A673 (cell line): ENCODE measurements at regions of chr1 and their contacts with region 1.

Region 1: GRCh38 chr1:112706908-112707663 is at the start of gene RHOC:
- DNase-seq: peak; percentile 87
- H3K4me3 ChIP-seq: peak within 1 kb of the TSS; percentile 64
- H3K27ac ChIP-seq: peak within 1 kb of the TSS; percentile 75
- H3K4me1 ChIP-seq: peaks cover 22% of the 10 kb centered on the region
- H3K27me3 ChIP-seq: no peaks in the 10 kb centered on the region
- CTCF ChIP-seq: peak; percentile 86
- total RNA-seq, gene RHOC: 54.3 and 62.5 TPM in 2 replicates

Region 2: DNA sequence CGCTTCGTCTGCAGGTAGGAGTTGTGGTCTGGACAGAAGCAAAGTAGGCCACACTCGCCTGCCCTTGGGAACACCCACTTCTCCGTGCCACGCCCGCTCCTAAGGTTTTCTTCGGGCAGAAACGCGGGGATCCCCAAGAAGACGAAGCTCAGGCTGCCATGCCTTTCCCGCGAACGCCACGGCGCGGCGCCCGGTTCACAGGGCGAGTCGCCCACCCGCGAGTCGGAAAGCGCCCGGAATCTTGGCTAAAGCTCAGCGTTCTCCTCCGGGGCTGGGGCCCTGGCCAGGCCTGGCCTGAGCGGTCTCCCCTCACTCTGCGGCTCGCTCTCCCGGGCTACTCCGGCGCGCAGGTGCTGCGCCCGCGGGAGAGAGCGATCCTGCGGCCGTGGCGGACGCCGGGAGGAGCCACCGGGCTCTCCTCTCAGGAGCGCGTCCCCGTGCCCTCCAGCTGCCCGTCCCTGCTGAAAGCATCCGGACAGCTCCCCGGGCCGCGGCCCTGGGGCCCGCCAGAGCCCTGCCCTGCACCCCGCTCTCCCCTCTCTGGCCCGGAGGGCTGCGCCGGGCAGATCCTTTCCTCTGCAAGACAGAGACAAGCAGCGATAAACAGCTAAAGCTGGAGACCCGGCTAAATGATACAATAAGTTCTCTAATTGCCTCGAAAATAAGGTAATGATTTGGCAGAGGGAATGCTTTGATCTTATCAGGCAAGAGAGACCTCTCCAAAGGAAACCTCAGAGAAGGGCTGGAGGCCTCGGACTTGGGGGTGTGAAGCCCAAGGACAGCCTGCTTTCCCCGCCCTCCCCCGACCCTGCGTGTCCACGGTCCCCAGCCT is 205.1 kb before region 1 on chr1:
- CTCF ChIA-PET with region 1: no interaction called
- POLR2A ChIA-PET with region 1: no interaction called
- intact Hi-C with region 1: loop called (anchors 5 kb)
- DNase-seq: peak; percentile 78
- H3K4me3 ChIP-seq: peak overlapping the region; percentile 55
- H3K27ac ChIP-seq: no peak overlapping the region
- H3K4me1 ChIP-seq: no peaks in the 10 kb centered on the region
- H3K27me3 ChIP-seq: no peaks in the 10 kb centered on the region
- CTCF ChIP-seq: peak; percentile 75

Region 3: GRCh38 chr1:112557385-112557784 is 149.7 kb before region 1 on chr1:
- CTCF ChIA-PET with region 1: no interaction called
- POLR2A ChIA-PET with region 1: no interaction called
- intact Hi-C with region 1: no loop called
- DNase-seq: no peak
- H3K4me3 ChIP-seq: no peak overlapping the region
- H3K27ac ChIP-seq: no peak overlapping the region
- H3K4me1 ChIP-seq: no peaks in the 10 kb centered on the region
- H3K27me3 ChIP-seq: no peaks in the 10 kb centered on the region
- CTCF ChIP-seq: no peak

Region 4: DNA sequence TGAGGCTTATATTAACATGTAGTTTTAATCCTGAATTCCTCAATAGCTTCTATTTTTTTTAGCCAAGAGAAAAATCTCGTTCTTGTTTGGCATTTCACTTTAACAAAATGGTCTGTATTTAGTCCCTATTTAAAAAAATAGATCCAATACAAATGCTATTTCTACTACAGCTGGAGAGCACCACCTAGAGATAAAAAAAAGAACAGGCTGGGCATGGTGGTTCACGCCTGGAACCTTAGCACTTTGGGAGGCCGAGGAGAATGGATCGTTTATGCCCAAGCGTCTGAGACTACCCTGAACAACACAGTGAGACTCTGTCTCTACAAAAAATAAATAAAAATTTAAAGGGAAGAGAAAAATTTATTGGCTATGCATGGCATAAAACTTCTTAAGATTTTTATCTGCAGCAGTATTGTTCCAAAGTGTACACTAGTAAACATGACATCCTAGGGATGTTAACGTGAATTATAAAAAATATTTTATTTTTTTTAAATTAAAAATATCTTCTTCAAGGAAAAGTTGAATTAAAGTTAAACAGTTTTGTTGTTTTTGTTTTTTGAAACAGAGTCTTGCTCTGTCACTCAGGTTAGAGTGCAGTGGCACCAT is 92.5 kb before region 1 on chr1:
- CTCF ChIA-PET with region 1: interaction called, 3 read pairs
- POLR2A ChIA-PET with region 1: no interaction called
- intact Hi-C with region 1: loop called (anchors 2 kb)
- DNase-seq: peak; percentile 67
- H3K4me3 ChIP-seq: no peak overlapping the region
- H3K27ac ChIP-seq: no peak overlapping the region
- H3K4me1 ChIP-seq: peaks cover 6% of the 10 kb centered on the region
- H3K27me3 ChIP-seq: no peaks in the 10 kb centered on the region
- CTCF ChIP-seq: peak; percentile 69

Region 5: DNA sequence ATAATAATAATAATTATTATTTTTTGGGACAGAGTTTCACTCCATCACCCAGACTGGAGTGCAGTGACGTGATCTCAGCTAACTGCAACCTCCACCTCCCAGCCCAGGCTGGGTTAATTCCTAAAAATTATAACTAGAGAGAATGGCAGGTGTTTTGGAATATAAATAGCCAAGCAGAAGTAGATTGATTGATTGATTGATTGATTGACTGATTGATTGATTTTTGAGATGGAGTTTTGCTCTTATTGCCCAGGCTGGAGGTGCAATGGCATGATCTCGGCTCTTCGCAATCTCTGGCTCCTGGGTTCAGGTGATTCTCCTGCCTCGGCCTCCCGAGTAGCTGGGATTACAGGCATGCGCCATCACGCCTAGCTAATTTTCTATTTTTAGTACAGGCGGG is 47.0 kb before region 1 on chr1:
- CTCF ChIA-PET with region 1: no interaction called
- POLR2A ChIA-PET with region 1: no interaction called
- intact Hi-C with region 1: no loop called
- DNase-seq: no peak
- H3K4me3 ChIP-seq: no peak overlapping the region
- H3K27ac ChIP-seq: no peak overlapping the region
- H3K4me1 ChIP-seq: no peaks in the 10 kb centered on the region
- H3K27me3 ChIP-seq: no peaks in the 10 kb centered on the region
- CTCF ChIP-seq: no peak